CD4-positive, alpha-beta memory T cell (primary cell): ENCODE measurements at regions of chr11 and their contacts with region 1.

Region 1: DNA sequence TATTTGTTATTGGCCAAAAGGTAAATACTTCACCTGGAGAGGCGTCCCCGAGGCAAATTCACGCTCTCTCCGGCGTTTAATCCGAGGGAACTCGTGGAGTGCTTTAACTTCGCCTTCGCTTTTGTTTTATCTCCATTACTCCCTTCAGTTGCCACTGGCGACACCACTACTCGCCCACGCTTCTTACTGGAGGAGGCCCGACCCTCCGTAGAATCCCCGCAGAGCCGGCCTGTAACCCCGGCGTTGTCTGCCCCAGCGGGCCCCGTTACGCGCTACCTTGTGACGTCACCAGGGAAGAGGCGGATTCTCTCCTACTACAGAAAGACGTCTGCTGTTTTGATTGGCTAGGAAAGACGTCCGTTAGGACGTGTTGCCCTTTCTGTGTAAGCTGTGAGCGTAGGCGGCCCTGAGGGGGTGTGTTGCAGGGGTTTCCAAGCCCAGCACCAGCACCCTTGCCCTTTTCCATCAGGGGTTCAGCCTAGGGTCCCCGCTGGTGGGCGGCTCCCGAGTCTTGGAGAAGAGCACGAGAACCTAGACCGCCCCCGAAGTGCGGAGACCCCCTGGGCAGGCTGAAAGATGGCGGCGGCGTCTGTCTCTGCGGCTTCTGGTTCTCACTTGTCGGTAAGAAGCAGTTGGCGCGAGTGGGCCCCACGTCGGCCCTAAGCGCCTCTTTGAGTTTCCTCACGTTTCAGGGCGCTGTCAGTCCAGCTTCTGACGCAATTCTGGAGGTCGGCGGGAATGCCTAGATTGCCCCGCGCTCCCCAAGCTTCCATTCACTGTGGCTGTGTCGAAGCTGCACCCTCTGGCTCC is at the start of gene CEP57:
- DNase-seq: peak; percentile 95 to 99 (median 96)
- H3K4me3 ChIP-seq: peak within 1 kb of the TSS; percentile 68 to 98
- H3K4me3 Mint-ChIP-seq: peak within 1 kb of the TSS; percentile 97 to 100 (median 99)
- H3K27ac ChIP-seq: peak within 1 kb of the TSS; percentile 99
- H3K27ac Mint-ChIP-seq: peak within 1 kb of the TSS; percentile 100
- H3K4me1 ChIP-seq: peaks cover 47% of the 10 kb centered on the region
- H3K4me1 Mint-ChIP-seq: peaks cover 43 to 70% (median 56%) of the 10 kb centered on the region in 4 donors
- H3K27me3 ChIP-seq: no peaks in the 10 kb centered on the region
- H3K27me3 Mint-ChIP-seq: no peaks in the 10 kb centered on the region
- total RNA-seq, gene CEP57: 76.0 to 78.9 TPM

Region 2: GRCh38 chr11:94543695-94544645 is 1246.4 kb before region 1 on chr11 and contains the start of gene FUT4:
- CTCF ChIA-PET with region 1: no interaction called
- POLR2A ChIA-PET with region 1: no interaction called
- intact Hi-C with region 1: loop called (anchors 2 kb)
- DNase-seq: peak; percentile 66 to 77 (median 74)
- H3K4me3 ChIP-seq: peak within 1 kb of the TSS in 1 of 2 donors; percentile 70
- H3K4me3 Mint-ChIP-seq: peak within 1 kb of the TSS; percentile 97 to 100 (median 99)
- H3K27ac ChIP-seq: peak within 1 kb of the TSS; percentile 83
- H3K27ac Mint-ChIP-seq: peak within 1 kb of the TSS; percentile 91 to 100 (median 99)
- H3K4me1 ChIP-seq: peaks cover 44% of the 10 kb centered on the region
- H3K4me1 Mint-ChIP-seq: peaks cover 25 to 41% (median 35%) of the 10 kb centered on the region in 4 donors
- H3K27me3 ChIP-seq: no peaks in the 10 kb centered on the region
- H3K27me3 Mint-ChIP-seq: no peaks in the 10 kb centered on the region
- total RNA-seq, gene FUT4: 6.7 to 7.4 TPM

Region 3: GRCh38 chr11:95089620-95090542 is 700.4 kb before region 1 on chr11 and contains the start of gene ENDOD1:
- CTCF ChIA-PET with region 1: interaction called, 3 read pairs
- POLR2A ChIA-PET with region 1: interaction called, 57 read pairs
- intact Hi-C with region 1: loop called (anchors 1 kb)
- DNase-seq: peak; percentile 86 to 89 (median 87)
- H3K4me3 ChIP-seq: peak within 1 kb of the TSS; percentile 45 to 76
- H3K4me3 Mint-ChIP-seq: peak within 1 kb of the TSS; percentile 91 to 96 (median 92)
- H3K27ac ChIP-seq: peak within 1 kb of the TSS; percentile 67
- H3K27ac Mint-ChIP-seq: peak within 1 kb of the TSS; percentile 92 to 99 (median 98)
- H3K4me1 ChIP-seq: peaks cover 43% of the 10 kb centered on the region
- H3K4me1 Mint-ChIP-seq: peaks cover 36 to 55% (median 46%) of the 10 kb centered on the region in 4 donors
- H3K27me3 ChIP-seq: no peaks in the 10 kb centered on the region
- H3K27me3 Mint-ChIP-seq: no peaks in the 10 kb centered on the region
- total RNA-seq, gene ENDOD1: 12.8 to 13.3 TPM

Region 4: GRCh38 chr11:95805869-95806268 is 15.5 kb after region 1 on chr11:
- CTCF ChIA-PET with region 1: interaction called, 4 read pairs
- POLR2A ChIA-PET with region 1: interaction called, 51 read pairs
- intact Hi-C with region 1: no loop called
- DNase-seq: peak in 1 of 5 donors; percentile 3
- H3K4me3 ChIP-seq: no peak overlapping the region
- H3K4me3 Mint-ChIP-seq: peak overlapping the region in 3 of 8 donors; percentile 3 to 57 (median 31)
- H3K27ac ChIP-seq: no peak overlapping the region
- H3K27ac Mint-ChIP-seq: peak overlapping the region in 4 of 7 donors; percentile 35 to 77 (median 67)
- H3K4me1 ChIP-seq: peaks cover 9% of the 10 kb centered on the region
- H3K4me1 Mint-ChIP-seq: peaks cover 0 to 25% (median 8%) of the 10 kb centered on the region in 4 donors
- H3K27me3 ChIP-seq: no peaks in the 10 kb centered on the region
- H3K27me3 Mint-ChIP-seq: no peaks in the 10 kb centered on the region

Region 5: DNA sequence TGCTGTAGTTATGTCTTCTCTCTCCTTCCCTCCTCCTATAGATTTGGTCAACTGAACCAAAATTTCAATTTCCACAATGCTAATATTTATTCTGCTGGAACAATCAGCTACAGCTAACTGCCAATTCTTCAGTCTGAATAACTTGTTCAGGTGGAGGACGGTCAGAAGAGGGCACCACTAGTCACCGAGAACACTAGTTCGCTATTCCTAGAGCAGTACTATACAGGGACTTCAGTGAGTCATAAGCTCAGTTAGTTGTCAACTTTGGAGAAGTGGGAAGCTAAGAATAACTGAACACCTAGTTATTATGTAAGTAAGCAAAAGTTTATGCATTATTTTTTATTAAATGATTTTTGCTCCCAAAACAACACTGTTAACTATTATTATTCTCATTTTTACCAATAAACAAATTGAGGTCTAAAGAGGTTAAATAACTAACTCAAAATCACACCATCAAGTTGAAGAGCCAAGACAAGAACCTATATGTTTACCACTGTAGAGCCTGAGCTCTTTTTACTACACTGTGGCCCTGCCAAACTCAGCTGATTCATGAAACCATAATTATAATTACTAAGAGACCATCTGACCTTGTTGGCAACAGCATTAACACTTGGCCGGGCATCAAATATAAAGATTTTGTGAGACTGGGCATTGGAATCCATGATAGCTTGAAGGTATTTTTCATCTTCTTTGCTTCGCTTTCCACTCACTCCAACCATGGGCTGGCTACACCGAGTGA is 58.9 kb after region 1 on chr11:
- CTCF ChIA-PET with region 1: no interaction called
- POLR2A ChIA-PET with region 1: no interaction called
- intact Hi-C with region 1: no loop called
- DNase-seq: peak in 1 of 5 donors; percentile 16
- H3K4me3 ChIP-seq: no peak overlapping the region
- H3K4me3 Mint-ChIP-seq: no peak overlapping the region
- H3K27ac ChIP-seq: no peak overlapping the region
- H3K27ac Mint-ChIP-seq: peak overlapping the region in 1 of 7 donors; percentile 67
- H3K4me1 ChIP-seq: no peaks in the 10 kb centered on the region
- H3K4me1 Mint-ChIP-seq: no peaks in the 10 kb centered on the region
- H3K27me3 ChIP-seq: no peaks in the 10 kb centered on the region
- H3K27me3 Mint-ChIP-seq: no peaks in the 10 kb centered on the region

Region 6: GRCh38 chr11:96389720-96390487 is 599.6 kb after region 1 on chr11 and contains the starts of genes CCDC82 and JRKL:
- CTCF ChIA-PET with region 1: interaction called, 4 read pairs
- POLR2A ChIA-PET with region 1: interaction called, 37 read pairs
- intact Hi-C with region 1: loop called (anchors 1 kb)
- DNase-seq: peak; percentile 97 to 99 (median 98)
- H3K4me3 ChIP-seq: peak within 1 kb of the TSS; percentile 85 to 93
- H3K4me3 Mint-ChIP-seq: peak within 1 kb of the TSS; percentile 92 to 98 (median 94)
- H3K27ac ChIP-seq: peak within 1 kb of the TSS; percentile 79
- H3K27ac Mint-ChIP-seq: peak within 1 kb of the TSS; percentile 91 to 98 (median 97)
- H3K4me1 ChIP-seq: peaks cover 36% of the 10 kb centered on the region
- H3K4me1 Mint-ChIP-seq: peaks cover 22 to 59% (median 37%) of the 10 kb centered on the region in 4 donors
- H3K27me3 ChIP-seq: no peaks in the 10 kb centered on the region
- H3K27me3 Mint-ChIP-seq: no peaks in the 10 kb centered on the region
- total RNA-seq, gene CCDC82: 37.9 to 42.8 TPM
- total RNA-seq, gene JRKL: 18.3 to 20.0 TPM